Endothelial cell of umbilical vein (primary cell): ENCODE measurements at regions of chr1 and their contacts with region 1.

Region 1: DNA sequence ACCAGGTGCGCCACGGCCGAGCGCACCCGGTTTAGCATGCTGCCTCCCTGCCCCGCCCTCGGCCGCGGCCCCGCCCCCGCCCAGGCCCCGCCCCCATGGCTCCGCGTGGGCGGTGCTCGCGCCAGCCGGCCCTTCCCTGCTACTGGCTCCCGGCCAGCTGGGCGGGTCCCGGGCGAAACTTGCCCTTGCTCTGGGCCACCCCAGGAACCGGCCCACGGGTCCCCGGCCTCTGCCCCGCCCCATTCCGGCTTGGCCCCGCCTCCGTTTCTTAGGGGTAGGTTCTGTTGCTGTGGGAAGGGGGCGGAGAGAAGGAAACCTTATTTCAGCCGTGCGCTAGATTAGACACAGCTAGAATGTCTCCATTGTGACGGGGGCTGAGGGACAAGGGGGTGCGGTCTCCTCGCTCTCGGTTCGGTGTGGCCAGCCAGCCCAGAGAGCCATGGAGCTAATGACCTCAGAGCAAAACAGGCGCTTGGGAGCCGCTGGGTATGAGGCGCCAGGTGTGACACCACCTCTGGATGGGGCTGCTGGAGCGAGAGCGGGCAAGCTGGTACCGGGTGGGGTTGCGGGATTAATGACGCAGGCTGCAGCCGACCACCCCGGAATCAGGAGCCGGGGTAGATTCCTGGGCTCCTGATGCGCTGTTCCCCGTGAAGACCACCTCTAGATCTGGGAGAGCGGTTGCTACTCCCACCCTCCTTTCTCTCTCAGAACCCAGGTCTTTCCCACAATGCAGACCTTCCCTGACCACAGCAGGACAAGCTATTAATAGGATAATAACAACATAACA is at the start of gene PPM1J:
- DNase-seq: peak; percentile 97
- H3K4me3 ChIP-seq: peak within 1 kb of the TSS; percentile 40 to 45 (median 42)
- H3K27ac ChIP-seq: no peak within 1 kb of the TSS
- H3K4me1 ChIP-seq: peaks cover 11% of the 10 kb centered on the region
- H3K27me3 ChIP-seq: no peaks in the 10 kb centered on the region
- CTCF ChIP-seq: no peak
- POLR2A ChIP-seq: no peak
- total RNA-seq, gene PPM1J: 1.7 and 2.4 TPM in 2 replicates

Region 2: DNA sequence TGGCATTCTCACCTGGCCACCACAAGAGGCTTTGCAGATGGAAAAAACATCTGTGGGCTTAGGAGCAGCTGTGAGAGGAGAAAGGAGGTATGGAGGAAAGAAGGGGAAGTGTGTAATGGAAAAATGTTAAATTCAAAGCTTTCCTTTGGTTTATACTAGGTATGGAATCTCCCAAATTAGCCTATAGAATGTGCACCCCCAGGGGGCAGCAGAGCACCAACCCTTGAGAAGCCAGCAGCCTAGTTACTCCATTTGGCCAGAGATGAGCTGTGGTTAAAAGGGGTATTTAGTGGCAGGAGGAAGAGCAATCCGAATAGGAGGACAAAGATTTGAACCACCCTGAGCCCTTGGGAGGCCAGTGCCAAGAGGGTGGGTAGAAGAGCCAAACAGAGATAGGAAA is 416.9 kb before region 1 on chr1:
- CTCF ChIA-PET with region 1: interaction called, 6 read pairs
- POLR2A ChIA-PET with region 1: no interaction called
- dilution Hi-C with region 1: no loop called
- intact Hi-C with region 1: loop called (anchors 5 kb)
- DNase-seq: peak; percentile 72
- H3K4me3 ChIP-seq: no peak overlapping the region
- H3K27ac ChIP-seq: no peak overlapping the region
- H3K4me1 ChIP-seq: no peaks in the 10 kb centered on the region
- H3K27me3 ChIP-seq: peaks cover 6% of the 10 kb centered on the region in 2 experiments
- CTCF ChIP-seq: peak; percentile 76 to 83
- POLR2A ChIP-seq: no peak

Region 3: GRCh38 chr1:112674439-112674985 is 40.9 kb before region 1 on chr1 and contains the start of gene MOV10:
- CTCF ChIA-PET with region 1: interaction called, 18 read pairs
- POLR2A ChIA-PET with region 1: no interaction called
- dilution Hi-C with region 1: no loop called
- intact Hi-C with region 1: no loop called
- DNase-seq: peak; percentile 81
- H3K4me3 ChIP-seq: peak within 1 kb of the TSS; percentile 67 to 88 (median 82)
- H3K27ac ChIP-seq: peak within 1 kb of the TSS; percentile 69
- H3K4me1 ChIP-seq: peaks cover 21% of the 10 kb centered on the region
- H3K27me3 ChIP-seq: no peaks in the 10 kb centered on the region
- CTCF ChIP-seq: no peak
- POLR2A ChIP-seq: peak; percentile 56
- total RNA-seq, gene MOV10: 103 and 113 TPM in 2 replicates

Region 4: DNA sequence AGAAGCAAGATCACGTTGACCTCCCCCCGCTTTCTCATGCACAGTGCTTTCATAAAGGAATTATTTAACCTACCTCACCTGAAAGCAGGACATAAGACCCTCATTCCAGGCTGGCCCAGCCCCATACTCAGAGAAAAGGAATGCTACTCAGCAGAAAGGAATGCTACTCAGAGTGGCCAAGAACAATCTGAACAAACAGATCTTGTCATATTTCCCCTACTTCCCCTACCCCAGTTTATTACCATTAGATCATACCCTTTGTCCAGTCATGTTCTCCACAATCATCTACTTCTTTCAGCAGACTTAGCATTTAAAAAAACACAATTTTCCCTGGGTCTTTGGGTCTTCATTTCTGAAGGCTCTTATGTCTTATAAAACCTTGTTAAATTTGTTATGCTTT is 150.7 kb after region 1 on chr1:
- CTCF ChIA-PET with region 1: interaction called, 3 read pairs
- POLR2A ChIA-PET with region 1: no interaction called
- dilution Hi-C with region 1: no loop called
- intact Hi-C with region 1: loop called (anchors 2 kb)
- DNase-seq: peak; percentile 94
- H3K4me3 ChIP-seq: no peak overlapping the region
- H3K27ac ChIP-seq: peak overlapping the region; percentile 97
- H3K4me1 ChIP-seq: peaks cover 43% of the 10 kb centered on the region
- H3K27me3 ChIP-seq: no peaks in the 10 kb centered on the region
- CTCF ChIP-seq: no peak
- POLR2A ChIP-seq: peak; percentile 76

Region 5: GRCh38 chr1:112971006-112971405 is 255.5 kb after region 1 on chr1:
- CTCF ChIA-PET with region 1: no interaction called
- POLR2A ChIA-PET with region 1: no interaction called
- dilution Hi-C with region 1: no loop called
- intact Hi-C with region 1: no loop called
- DNase-seq: no peak
- H3K4me3 ChIP-seq: no peak overlapping the region
- H3K27ac ChIP-seq: no peak overlapping the region
- H3K4me1 ChIP-seq: no peaks in the 10 kb centered on the region
- H3K27me3 ChIP-seq: no peaks in the 10 kb centered on the region
- CTCF ChIP-seq: no peak
- POLR2A ChIP-seq: no peak

Region 6: DNA sequence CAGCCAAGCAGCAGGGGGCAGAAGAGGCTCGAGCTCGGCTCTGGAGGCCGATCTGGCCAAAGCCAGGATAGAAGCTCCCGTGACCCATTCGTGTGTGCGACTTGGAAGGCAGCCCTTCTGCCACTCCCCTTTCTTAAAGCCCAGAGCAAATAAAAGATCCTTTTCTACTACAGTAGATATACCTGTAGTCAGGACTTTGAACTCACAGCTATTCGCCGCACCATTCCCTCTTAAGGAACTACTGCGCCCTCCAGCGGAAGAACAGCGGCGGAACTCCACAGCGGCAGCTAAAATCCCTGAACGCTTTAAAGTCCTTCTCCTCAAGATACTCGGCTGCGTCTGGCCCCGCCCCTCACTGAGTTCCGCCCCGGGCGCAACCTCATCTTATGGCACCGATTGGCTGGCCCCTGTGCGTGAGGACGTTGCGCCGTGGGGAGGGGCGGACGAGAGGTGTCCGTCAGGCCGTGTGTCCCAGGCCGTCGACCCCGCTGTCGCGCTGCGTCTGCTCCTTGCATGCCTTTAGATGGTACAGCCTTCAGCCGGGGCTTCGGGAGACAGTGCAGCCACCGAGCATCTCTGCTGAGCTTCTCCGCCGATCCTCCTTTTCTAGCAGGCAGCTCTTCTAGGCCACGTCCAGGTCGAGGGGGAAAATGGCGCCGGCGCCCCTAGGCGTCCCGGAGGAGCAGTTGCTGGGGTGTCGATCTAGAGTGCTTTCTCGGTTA is 357.5 kb after region 1 on chr1 and contains the start of gene LRIG2:
- CTCF ChIA-PET with region 1: interaction called, 76 read pairs
- POLR2A ChIA-PET with region 1: no interaction called
- dilution Hi-C with region 1: no loop called
- intact Hi-C with region 1: loop called (anchors 1 kb)
- DNase-seq: peak; percentile 98
- H3K4me3 ChIP-seq: peak within 1 kb of the TSS; percentile 59 to 96 (median 69)
- H3K27ac ChIP-seq: peak within 1 kb of the TSS; percentile 71
- H3K4me1 ChIP-seq: peaks cover 11% of the 10 kb centered on the region
- H3K27me3 ChIP-seq: no peaks in the 10 kb centered on the region
- CTCF ChIP-seq: peak; percentile 73 to 86
- POLR2A ChIP-seq: peak; percentile 96
- total RNA-seq, gene LRIG2: 14.4 and 20.1 TPM in 2 replicates

Region 7: GRCh38 chr1:113811888-113812660 is 1096.6 kb after region 1 on chr1 and contains the start of gene RSBN1:
- CTCF ChIA-PET with region 1: no interaction called
- POLR2A ChIA-PET with region 1: no interaction called
- dilution Hi-C with region 1: no loop called
- intact Hi-C with region 1: loop called (anchors 5 kb)
- DNase-seq: peak; percentile 100
- H3K4me3 ChIP-seq: peak within 1 kb of the TSS; percentile 65 to 97 (median 74)
- H3K27ac ChIP-seq: peak within 1 kb of the TSS; percentile 81
- H3K4me1 ChIP-seq: peaks cover 26% of the 10 kb centered on the region
- H3K27me3 ChIP-seq: no peaks in the 10 kb centered on the region
- CTCF ChIP-seq: peak in 1 of 2 donors; percentile 8
- POLR2A ChIP-seq: peak; percentile 89
- total RNA-seq, gene RSBN1: 10.8 and 13.4 TPM in 2 replicates